ENCODE measurements at regions of chr1 and their contacts with region 1.

Region 1: DNA sequence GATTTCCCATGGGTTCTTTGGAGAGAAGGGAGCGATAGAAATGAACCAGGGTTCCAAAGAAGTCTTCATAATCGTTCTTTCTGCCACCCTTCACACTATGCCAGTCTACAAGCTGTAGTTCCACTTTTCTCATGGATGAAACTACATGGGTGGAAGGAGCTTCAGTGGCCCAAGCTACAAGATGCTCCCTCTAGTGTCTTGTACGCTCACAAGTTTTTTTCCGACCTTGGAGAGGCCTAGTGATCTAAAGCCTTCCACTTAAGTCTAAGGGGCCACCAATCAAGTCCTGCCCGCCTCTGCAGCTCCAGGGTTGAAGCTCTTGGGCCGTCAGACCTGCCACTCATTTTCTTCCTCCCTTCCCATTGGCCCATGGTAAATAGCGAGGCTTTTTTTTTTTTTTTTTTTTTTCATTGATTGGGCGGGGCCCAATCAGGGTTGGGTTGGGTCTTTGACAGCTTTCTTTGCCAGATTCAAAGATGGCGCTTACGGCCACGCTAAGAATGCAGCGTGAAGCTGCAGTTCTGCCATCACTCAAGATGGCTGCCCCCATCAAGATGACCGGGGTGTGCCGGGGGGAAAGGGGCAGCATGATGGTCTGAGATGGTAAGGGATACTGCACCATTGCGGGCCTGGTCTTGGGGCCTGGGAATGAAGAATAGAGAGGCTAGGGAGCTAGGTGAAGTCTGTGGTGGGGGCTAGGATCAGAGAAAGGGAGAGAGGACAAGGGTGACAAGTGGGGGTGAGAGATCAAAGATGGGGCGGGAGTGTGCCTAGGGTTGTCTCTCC is at the start of gene TOMM40L:
- DNase-seq: peak; percentile 92 to 96 (median 94)
- ATAC-seq: peak; percentile 95 to 97 (median 96)
- H3K4me3 ChIP-seq: peak within 1 kb of the TSS; percentile 44 to 82 (median 75)
- H3K27ac ChIP-seq: peak within 1 kb of the TSS; percentile 74 to 94 (median 86)
- H3K4me1 ChIP-seq: peaks cover 0 to 32% (median 18%) of the 10 kb centered on the region in 12 donors
- H3K27me3 ChIP-seq: no peaks in the 10 kb centered on the region
- CTCF ChIP-seq: peak; percentile 32 to 75 (median 56)
- POLR2A ChIP-seq: peak in 1 of 2 donors; percentile 24
- total RNA-seq, gene TOMM40L: 24.1 to 37.1 (median 31.1) TPM

Region 2: DNA sequence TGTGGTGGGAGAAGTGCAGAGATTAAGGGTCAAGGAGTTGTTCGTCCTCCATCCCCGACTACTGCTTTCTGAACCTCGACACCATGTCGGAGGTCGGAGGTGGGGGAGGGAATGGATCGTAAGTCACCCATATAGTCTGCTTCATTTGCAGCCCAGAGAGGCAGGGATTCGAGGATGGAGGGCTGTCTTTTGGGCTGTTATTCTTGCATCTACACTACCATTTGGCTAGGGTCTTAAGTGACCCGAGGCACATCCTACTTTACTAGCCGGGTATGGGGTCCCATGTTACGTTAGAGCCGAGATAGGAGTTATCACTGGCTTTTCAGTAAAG is 65.8 kb before region 1 on chr1:
- intact Hi-C with region 1: loop called in 1 of 10 experiments (anchors 2 kb)
- DNase-seq: no peak
- ATAC-seq: no peak
- H3K4me3 ChIP-seq: peak overlapping the region; percentile 67 to 97 (median 89)
- H3K27ac ChIP-seq: peak overlapping the region; percentile 72 to 95 (median 88)
- H3K4me1 ChIP-seq: peaks cover 0 to 41% (median 28%) of the 10 kb centered on the region in 12 donors
- H3K27me3 ChIP-seq: no peaks in the 10 kb centered on the region
- CTCF ChIP-seq: no peak
- POLR2A ChIP-seq: no peak

Region 3: GRCh38 chr1:161201828-161202725 is 23.6 kb before region 1 on chr1 and contains the start of gene NDUFS2:
- intact Hi-C with region 1: loop called in 3 of 10 experiments (anchors 1 to 2 kb)
- DNase-seq: peak; percentile 97 to 99 (median 99)
- ATAC-seq: peak; percentile 81 to 92 (median 84)
- H3K4me3 ChIP-seq: peak within 1 kb of the TSS; percentile 66 to 92 (median 80)
- H3K27ac ChIP-seq: peak within 1 kb of the TSS; percentile 93 to 99 (median 97)
- H3K4me1 ChIP-seq: peaks cover 6 to 91% (median 78%) of the 10 kb centered on the region in 12 donors
- H3K27me3 ChIP-seq: no peaks in the 10 kb centered on the region
- CTCF ChIP-seq: peak in 2 of 12 donors; percentile 7 to 25
- POLR2A ChIP-seq: peak; percentile 83 to 86
- total RNA-seq, gene NDUFS2: 214 to 460 (median 297) TPM

Region 4: DNA sequence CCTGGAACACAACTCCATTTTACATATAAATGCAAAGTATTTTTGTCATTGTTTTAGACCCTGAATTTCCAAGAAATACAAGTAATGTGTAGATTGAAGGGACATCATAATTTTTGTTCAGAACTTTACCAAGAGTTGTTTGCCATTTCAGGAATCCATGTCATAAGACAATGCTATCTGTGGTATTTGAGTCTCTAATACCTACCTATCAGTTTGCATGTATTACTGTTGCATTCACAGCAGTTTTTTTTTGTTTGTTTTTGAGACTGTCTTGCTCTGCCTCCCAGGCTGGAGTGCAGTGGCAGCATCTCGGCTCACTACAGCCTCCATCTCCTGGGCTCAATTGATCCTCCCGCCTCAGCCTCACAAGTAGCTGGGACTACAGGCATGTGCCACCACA is 66.9 kb after region 1 on chr1:
- intact Hi-C with region 1: loop called in 9 of 10 experiments (anchors 1 to 5 kb)
- DNase-seq: no peak
- ATAC-seq: no peak
- H3K4me3 ChIP-seq: no peak overlapping the region
- H3K27ac ChIP-seq: no peak overlapping the region
- H3K4me1 ChIP-seq: peaks cover 0 to 4% (median 0%) of the 10 kb centered on the region in 12 donors
- H3K27me3 ChIP-seq: no peaks in the 10 kb centered on the region
- CTCF ChIP-seq: no peak
- POLR2A ChIP-seq: no peak

Region 5: GRCh38 chr1:161367684-161368400 is 142.1 kb after region 1 on chr1 and contains the start of gene CFAP126:
- intact Hi-C with region 1: loop called in 3 of 10 experiments (anchors 5 kb)
- DNase-seq: peak in 4 of 5 donors; percentile 41 to 74 (median 67)
- ATAC-seq: peak; percentile 72 to 94 (median 94)
- H3K4me3 ChIP-seq: no peak within 1 kb of the TSS
- H3K27ac ChIP-seq: peak within 1 kb of the TSS in 6 of 12 donors; percentile 24 to 71 (median 42)
- H3K4me1 ChIP-seq: peaks cover 0 to 15% (median 5%) of the 10 kb centered on the region in 12 donors
- H3K27me3 ChIP-seq: no peaks in the 10 kb centered on the region
- CTCF ChIP-seq: peak in 7 of 12 donors; percentile 15 to 42 (median 26)
- POLR2A ChIP-seq: no peak
- total RNA-seq, gene CFAP126: not detected

Region 6: DNA sequence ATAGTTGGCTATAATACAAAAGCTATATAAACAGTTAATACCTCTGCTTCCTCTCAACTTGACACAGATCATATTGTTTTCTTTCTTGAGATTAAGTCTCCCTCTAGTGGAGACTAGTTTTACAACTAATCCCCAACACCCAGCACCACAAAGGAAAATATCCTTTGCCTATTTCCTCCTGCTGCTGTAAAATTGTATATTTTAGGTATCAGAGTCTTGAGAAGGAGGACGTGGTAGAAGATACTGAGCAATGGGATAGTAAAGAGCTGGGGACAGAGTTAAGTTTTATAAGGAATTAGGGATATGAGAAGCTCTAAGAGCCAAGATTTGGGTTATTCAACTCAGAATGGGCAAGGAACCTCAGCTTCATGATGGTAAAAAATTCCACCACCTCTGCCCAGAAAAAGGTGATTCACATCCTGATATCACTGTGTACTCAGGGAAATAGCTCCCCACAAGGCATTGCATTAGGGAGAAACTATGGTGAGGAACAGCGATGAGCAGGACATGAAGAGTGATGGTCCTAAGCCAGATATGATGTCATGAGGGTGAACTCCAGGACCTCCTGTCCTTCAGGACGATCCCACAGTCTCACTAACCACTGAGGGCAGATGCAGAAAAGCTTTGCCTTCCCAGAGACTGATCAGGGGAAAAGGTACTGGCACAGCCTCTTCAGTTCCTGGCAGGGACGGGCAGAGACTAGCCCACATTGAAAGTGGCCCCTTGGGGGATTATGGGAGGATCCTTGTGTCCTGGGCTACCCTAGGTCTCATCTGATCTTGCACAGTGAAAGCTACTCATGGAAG is 156.7 kb after region 1 on chr1:
- intact Hi-C with region 1: loop called (anchors 1 to 5 kb)
- DNase-seq: no peak
- ATAC-seq: peak; percentile 62 to 88 (median 76)
- H3K4me3 ChIP-seq: no peak overlapping the region
- H3K27ac ChIP-seq: peak overlapping the region in 3 of 12 donors; percentile 56 to 73 (median 70)
- H3K4me1 ChIP-seq: peaks cover 0 to 34% (median 0%) of the 10 kb centered on the region in 12 donors
- H3K27me3 ChIP-seq: no peaks in the 10 kb centered on the region
- CTCF ChIP-seq: peak; percentile 51 to 83 (median 66)
- POLR2A ChIP-seq: no peak